CD4-positive, alpha-beta T cell (primary cell): ENCODE measurements at regions of chr3 and their contacts with region 1.

Region 1: GRCh38 chr3:43105596-43106292 is at the start of gene POMGNT2:
- DNase-seq: peak; percentile 77 to 95 (median 87)
- ATAC-seq: peak; percentile 94
- H3K4me3 ChIP-seq: peak within 1 kb of the TSS; percentile 68
- H3K4me3 Mint-ChIP-seq: peak within 1 kb of the TSS; percentile 89
- H3K27ac ChIP-seq: no peak within 1 kb of the TSS
- H3K27ac Mint-ChIP-seq: peak within 1 kb of the TSS; percentile 56
- H3K4me1 ChIP-seq: peaks cover 17% of the 10 kb centered on the region
- H3K4me1 Mint-ChIP-seq: peaks cover 30% of the 10 kb centered on the region
- H3K27me3 ChIP-seq: no peaks in the 10 kb centered on the region
- H3K27me3 Mint-ChIP-seq: no peaks in the 10 kb centered on the region
- CTCF ChIP-seq: no peak
- total RNA-seq, gene POMGNT2: 6.8 to 8.4 TPM

Region 2: DNA sequence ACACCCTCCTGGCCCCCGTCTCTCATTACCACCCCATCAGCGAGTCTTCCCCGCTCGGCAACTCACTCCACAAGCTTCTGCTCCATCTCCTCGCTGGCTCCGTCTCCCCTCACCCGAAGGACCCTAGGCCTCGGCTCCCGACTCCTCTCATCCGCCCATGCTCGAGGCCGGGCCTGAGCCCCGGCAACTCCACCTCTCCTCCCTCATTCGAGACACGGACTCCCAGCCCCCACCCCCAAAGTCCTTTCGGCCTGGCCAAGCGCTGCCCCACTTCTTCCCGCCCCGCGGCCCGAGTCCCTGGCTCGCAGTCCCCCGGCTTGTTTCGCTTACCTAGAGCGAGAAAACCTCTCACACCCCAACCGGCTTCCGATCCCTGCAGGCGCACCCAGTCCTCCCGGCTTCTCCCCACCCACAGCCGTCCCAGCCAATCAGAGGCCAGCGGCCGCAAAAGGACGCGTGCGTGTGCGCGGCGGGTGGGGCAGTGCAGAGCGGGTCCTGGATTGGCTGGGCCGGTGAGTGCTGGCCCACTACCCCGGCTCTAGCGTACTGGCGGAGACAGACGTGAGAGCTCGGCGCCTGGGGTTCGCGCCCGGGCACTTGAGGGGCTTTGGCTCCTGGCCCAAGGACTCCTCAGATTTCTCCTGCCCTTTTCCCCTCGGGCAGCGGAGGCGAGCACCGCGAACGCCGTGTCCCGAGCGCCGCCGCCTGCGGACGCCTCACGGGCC is 301.5 kb before region 1 on chr3 and contains the start of gene HIGD1A:
- CTCF ChIA-PET with region 1: no interaction called
- POLR2A ChIA-PET with region 1: no interaction called
- intact Hi-C with region 1: loop called in 1 of 2 experiments (anchors 10 kb)
- DNase-seq: peak; percentile 81 to 97 (median 92)
- ATAC-seq: peak; percentile 99
- H3K4me3 ChIP-seq: peak within 1 kb of the TSS; percentile 92
- H3K4me3 Mint-ChIP-seq: peak within 1 kb of the TSS; percentile 99
- H3K27ac ChIP-seq: peak within 1 kb of the TSS; percentile 74 to 75
- H3K27ac Mint-ChIP-seq: peak within 1 kb of the TSS; percentile 97
- H3K4me1 ChIP-seq: peaks cover 26% of the 10 kb centered on the region
- H3K4me1 Mint-ChIP-seq: peaks cover 55% of the 10 kb centered on the region
- H3K27me3 ChIP-seq: peaks cover 4% of the 10 kb centered on the region in 2 experiments
- H3K27me3 Mint-ChIP-seq: peaks cover 17% of the 10 kb centered on the region
- CTCF ChIP-seq: no peak
- total RNA-seq, gene HIGD1A: 9.3 to 11.3 TPM

Region 3: DNA sequence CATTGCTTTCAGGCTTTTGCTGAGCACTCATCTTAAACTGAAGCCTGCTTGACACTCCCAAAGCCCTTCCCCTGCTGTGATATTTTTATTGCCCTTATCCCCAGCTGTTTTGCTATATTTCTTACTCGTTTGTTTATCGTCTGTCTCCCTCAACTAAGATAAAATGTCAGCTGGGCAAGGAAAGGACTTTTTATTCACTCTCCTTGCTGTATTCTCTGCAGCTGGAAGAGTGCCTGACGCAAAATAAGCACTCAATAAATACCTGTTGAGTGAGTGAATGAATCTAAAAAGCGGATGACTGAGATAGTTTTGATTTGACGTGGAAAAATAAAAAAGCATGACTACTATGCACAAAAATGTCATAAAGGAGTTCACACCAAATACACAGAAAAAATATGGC is 84.9 kb after region 1 on chr3:
- CTCF ChIA-PET with region 1: no interaction called
- POLR2A ChIA-PET with region 1: no interaction called
- intact Hi-C with region 1: no loop called
- DNase-seq: no peak
- ATAC-seq: no peak
- H3K4me3 ChIP-seq: no peak overlapping the region
- H3K4me3 Mint-ChIP-seq: no peak overlapping the region
- H3K27ac ChIP-seq: no peak overlapping the region
- H3K27ac Mint-ChIP-seq: no peak overlapping the region
- H3K4me1 ChIP-seq: peaks cover 47% of the 10 kb centered on the region
- H3K4me1 Mint-ChIP-seq: peaks cover 62% of the 10 kb centered on the region
- H3K27me3 ChIP-seq: no peaks in the 10 kb centered on the region
- H3K27me3 Mint-ChIP-seq: no peaks in the 10 kb centered on the region
- CTCF ChIP-seq: no peak

Region 4: GRCh38 chr3:43690400-43691119 is 584.8 kb after region 1 on chr3 and contains the start of gene ABHD5:
- CTCF ChIA-PET with region 1: no interaction called
- POLR2A ChIA-PET with region 1: no interaction called
- intact Hi-C with region 1: loop called in 1 of 2 experiments (anchors 5 kb)
- DNase-seq: peak; percentile 92 to 99 (median 97)
- ATAC-seq: peak; percentile 92
- H3K4me3 ChIP-seq: peak within 1 kb of the TSS; percentile 64
- H3K4me3 Mint-ChIP-seq: peak within 1 kb of the TSS; percentile 96
- H3K27ac ChIP-seq: peak within 1 kb of the TSS; percentile 59 to 67
- H3K27ac Mint-ChIP-seq: peak within 1 kb of the TSS; percentile 93
- H3K4me1 ChIP-seq: peaks cover 18% of the 10 kb centered on the region
- H3K4me1 Mint-ChIP-seq: peaks cover 33% of the 10 kb centered on the region
- H3K27me3 ChIP-seq: no peaks in the 10 kb centered on the region
- H3K27me3 Mint-ChIP-seq: no peaks in the 10 kb centered on the region
- CTCF ChIP-seq: peak; percentile 48
- total RNA-seq, gene ABHD5: 6.4 to 9.3 TPM

Region 5: DNA sequence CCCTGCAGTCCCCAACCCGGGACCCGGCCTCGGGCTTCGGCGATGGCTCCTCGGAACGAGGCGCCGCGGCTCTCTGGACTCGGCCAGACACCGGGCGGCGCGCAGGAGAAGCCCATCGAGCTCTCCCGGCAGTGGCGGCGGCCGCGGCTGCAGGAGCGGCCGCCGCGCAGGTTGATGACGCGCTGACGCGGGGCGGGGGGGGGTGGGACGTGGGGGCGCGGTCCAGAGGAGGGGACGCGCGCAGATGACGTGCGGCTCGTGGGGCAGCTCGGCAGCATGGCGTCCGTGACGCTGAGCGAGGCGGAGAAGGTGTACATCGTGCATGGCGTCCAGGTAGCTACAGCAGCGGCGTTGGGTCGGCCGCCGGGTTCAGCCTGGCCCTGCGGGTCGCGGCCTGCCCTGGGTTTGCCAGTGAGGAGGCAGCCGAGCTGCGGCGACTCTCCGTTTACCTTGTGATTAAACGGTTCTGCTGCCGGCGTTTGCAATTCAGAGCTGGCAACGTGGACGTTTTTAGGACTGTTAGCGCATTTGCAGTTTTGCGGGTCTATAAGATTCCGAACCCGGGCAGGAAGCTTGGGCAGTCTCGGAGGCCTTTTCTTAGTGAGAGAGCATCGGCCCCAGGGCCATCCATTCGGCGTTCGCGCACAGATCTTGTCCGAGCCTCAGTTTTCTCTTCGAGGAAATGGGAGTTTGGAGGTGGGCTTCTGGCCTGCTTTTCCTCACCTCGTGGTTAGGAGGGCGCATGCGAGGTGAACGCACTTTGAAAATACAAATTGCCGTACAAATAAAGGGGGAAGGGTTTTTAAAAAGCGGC is 1870.5 kb after region 1 on chr3 and contains the starts of genes EXOSC7 and ZDHHC3:
- CTCF ChIA-PET with region 1: no interaction called
- POLR2A ChIA-PET with region 1: no interaction called
- intact Hi-C with region 1: loop called in 1 of 2 experiments (anchors 10 kb)
- DNase-seq: peak; percentile 77 to 97 (median 84)
- ATAC-seq: peak; percentile 95
- H3K4me3 ChIP-seq: peak within 1 kb of the TSS; percentile 95
- H3K4me3 Mint-ChIP-seq: peak within 1 kb of the TSS; percentile 98
- H3K27ac ChIP-seq: peak within 1 kb of the TSS; percentile 70 to 89
- H3K27ac Mint-ChIP-seq: peak within 1 kb of the TSS; percentile 94
- H3K4me1 ChIP-seq: peaks cover 48% of the 10 kb centered on the region
- H3K4me1 Mint-ChIP-seq: peaks cover 73% of the 10 kb centered on the region
- H3K27me3 ChIP-seq: no peaks in the 10 kb centered on the region
- H3K27me3 Mint-ChIP-seq: no peaks in the 10 kb centered on the region
- CTCF ChIP-seq: no peak
- total RNA-seq, gene EXOSC7: 28.1 to 28.4 TPM
- total RNA-seq, gene ZDHHC3: 34.4 to 34.6 TPM